ENCODE measurements at regions of chr13 and their contacts with region 1.

Region 1: DNA sequence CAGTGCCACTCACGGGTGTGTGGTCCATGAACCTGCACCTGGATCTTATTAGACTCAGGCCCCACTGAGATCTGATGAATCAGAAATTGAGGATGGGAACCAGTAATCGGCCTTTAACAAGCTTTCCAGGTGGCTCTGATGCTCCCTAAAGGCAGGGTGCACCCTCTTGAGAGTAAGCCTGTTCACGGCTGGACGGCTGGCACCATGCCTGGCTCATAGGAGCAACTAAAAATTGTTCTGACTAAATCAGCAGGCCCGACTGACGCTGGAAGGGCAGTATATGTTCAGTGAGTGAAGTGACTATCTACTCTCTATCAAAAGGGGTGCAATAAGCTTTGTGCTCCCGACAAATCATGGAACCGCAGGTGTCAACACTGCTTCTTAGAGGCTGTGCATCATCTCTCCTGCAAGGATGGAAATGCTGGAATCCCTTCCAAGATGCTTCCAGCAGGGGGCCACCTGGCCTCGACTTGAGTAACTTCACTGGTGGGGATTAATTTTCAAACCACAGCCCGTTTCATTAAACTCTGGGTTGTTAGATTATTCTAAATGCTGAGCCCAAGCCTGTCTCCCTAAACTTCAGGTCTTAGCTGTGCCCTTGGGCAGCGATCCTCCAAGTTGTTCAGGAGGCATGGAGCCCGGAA is 28.4 kb downstream of the TMTC4 start:
- DNase-seq: peak; percentile 34
- H3K4me3 ChIP-seq: no peak overlapping the region
- H3K27ac ChIP-seq: no peak overlapping the region
- H3K4me1 ChIP-seq: no peaks in the 10 kb centered on the region
- H3K27me3 ChIP-seq: no peaks in the 10 kb centered on the region
- CTCF ChIP-seq: peak; percentile 56 to 57
- POLR2A ChIP-seq: no peak

Region 2: GRCh38 chr13:100497389-100497788 is 148.8 kb before region 1 on chr13:
- CTCF ChIA-PET with region 1: no interaction called
- POLR2A ChIA-PET with region 1: no interaction called
- dilution Hi-C with region 1: no loop called
- intact Hi-C with region 1: no loop called
- DNase-seq: peak; percentile 33
- H3K4me3 ChIP-seq: no peak overlapping the region
- H3K27ac ChIP-seq: no peak overlapping the region
- H3K4me1 ChIP-seq: no peaks in the 10 kb centered on the region
- H3K27me3 ChIP-seq: no peaks in the 10 kb centered on the region
- CTCF ChIP-seq: no peak
- POLR2A ChIP-seq: no peak

Region 3: GRCh38 chr13:100588331-100589177 is 57.6 kb before region 1 on chr13 and contains the start of gene GGACT:
- CTCF ChIA-PET with region 1: no interaction called
- POLR2A ChIA-PET with region 1: no interaction called
- dilution Hi-C with region 1: no loop called
- intact Hi-C with region 1: no loop called
- DNase-seq: peak; percentile 56
- H3K4me3 ChIP-seq: peak within 1 kb of the TSS; percentile 27 to 67 (median 57)
- H3K27ac ChIP-seq: peak within 1 kb of the TSS; percentile 33
- H3K4me1 ChIP-seq: peaks cover 15% of the 10 kb centered on the region
- H3K27me3 ChIP-seq: no peaks in the 10 kb centered on the region
- CTCF ChIP-seq: peak; percentile 72 to 92
- POLR2A ChIP-seq: no peak
- total RNA-seq, gene GGACT: 5.4 and 6.5 TPM in 2 replicates

Region 4: GRCh38 chr13:101098873-101099272 is 452.7 kb after region 1 on chr13:
- CTCF ChIA-PET with region 1: no interaction called
- POLR2A ChIA-PET with region 1: no interaction called
- dilution Hi-C with region 1: no loop called
- intact Hi-C with region 1: loop called (anchors 1 kb)
- DNase-seq: no peak
- H3K4me3 ChIP-seq: no peak overlapping the region
- H3K27ac ChIP-seq: no peak overlapping the region
- H3K4me1 ChIP-seq: no peaks in the 10 kb centered on the region
- H3K27me3 ChIP-seq: no peaks in the 10 kb centered on the region
- CTCF ChIP-seq: no peak
- POLR2A ChIP-seq: no peak

Region 5: GRCh38 chr13:101127741-101128353 is 481.7 kb after region 1 on chr13:
- CTCF ChIA-PET with region 1: interaction called, 4 read pairs
- POLR2A ChIA-PET with region 1: no interaction called
- dilution Hi-C with region 1: no loop called
- intact Hi-C with region 1: loop called (anchors 1 kb)
- DNase-seq: peak; percentile 66
- H3K4me3 ChIP-seq: no peak overlapping the region
- H3K27ac ChIP-seq: no peak overlapping the region
- H3K4me1 ChIP-seq: no peaks in the 10 kb centered on the region
- H3K27me3 ChIP-seq: no peaks in the 10 kb centered on the region
- CTCF ChIP-seq: peak; percentile 61 to 63
- POLR2A ChIP-seq: no peak

Measured in endothelial cell of umbilical vein (primary cell).